CD4-positive, alpha-beta memory T cell (primary cell): ENCODE measurements at regions of chr14 and their contacts with region 1.

Region 1: GRCh38 chr14:71320107-71320733 is 413.0 kb downstream of the PCNX1 start:
- DNase-seq: peak; percentile 98 to 99 (median 99)
- H3K4me3 ChIP-seq: peak within 1 kb of the TSS; percentile 55 to 77
- H3K4me3 Mint-ChIP-seq: peak within 1 kb of the TSS; percentile 91 to 97 (median 93)
- H3K27ac ChIP-seq: peak within 1 kb of the TSS; percentile 92
- H3K27ac Mint-ChIP-seq: peak within 1 kb of the TSS; percentile 90 to 99 (median 97)
- H3K4me1 ChIP-seq: peaks cover 43% of the 10 kb centered on the region
- H3K4me1 Mint-ChIP-seq: peaks cover 37 to 47% (median 41%) of the 10 kb centered on the region in 4 donors
- H3K27me3 ChIP-seq: no peaks in the 10 kb centered on the region
- H3K27me3 Mint-ChIP-seq: no peaks in the 10 kb centered on the region

Region 2: DNA sequence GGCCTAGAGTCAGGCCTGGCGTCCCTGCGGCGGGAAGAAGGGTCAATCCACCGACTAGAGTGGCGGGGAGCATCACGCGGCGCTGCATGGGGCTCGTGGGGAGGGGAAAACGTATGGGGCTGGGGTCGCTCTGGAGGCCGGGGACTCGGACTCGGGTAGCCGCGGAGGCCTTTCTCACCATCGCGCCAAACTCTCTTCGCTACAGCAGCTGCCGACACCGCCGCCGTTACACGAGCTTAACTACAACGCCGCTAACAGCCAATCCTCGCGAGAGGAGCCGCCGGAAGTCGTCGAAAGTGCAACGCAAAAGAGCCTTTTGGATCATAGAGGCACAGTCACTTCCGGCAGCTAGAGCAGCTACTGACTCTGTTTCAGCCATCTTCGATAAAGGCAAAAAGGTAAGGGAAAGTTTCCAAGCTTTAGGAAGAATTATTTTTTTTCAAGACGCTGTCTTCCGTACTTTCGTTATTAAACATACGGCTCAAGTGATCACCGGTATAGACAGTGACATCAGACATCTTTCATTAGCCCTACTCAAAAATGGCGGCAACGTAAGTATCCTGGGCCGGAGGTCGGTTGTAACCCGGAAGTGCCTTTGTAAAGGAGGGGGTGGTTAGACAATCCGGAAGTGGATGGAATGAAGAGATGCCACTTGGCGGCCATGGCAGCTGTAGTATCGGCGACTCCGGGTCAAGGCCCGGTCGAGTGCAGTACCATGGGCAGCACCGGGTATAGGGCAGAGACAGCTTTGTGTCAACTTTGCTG is 1922.0 kb before region 1 on chr14 and contains the starts of genes ERH and SLC39A9:
- CTCF ChIA-PET with region 1: no interaction called
- POLR2A ChIA-PET with region 1: interaction called, 3 read pairs
- intact Hi-C with region 1: loop called (anchors 5 kb)
- DNase-seq: peak; percentile 96 to 98 (median 96)
- H3K4me3 ChIP-seq: peak within 1 kb of the TSS; percentile 86 to 91
- H3K4me3 Mint-ChIP-seq: peak within 1 kb of the TSS; percentile 91 to 99 (median 96)
- H3K27ac ChIP-seq: peak within 1 kb of the TSS; percentile 87
- H3K27ac Mint-ChIP-seq: peak within 1 kb of the TSS; percentile 98 to 100 (median 100)
- H3K4me1 ChIP-seq: peaks cover 81% of the 10 kb centered on the region
- H3K4me1 Mint-ChIP-seq: peaks cover 41 to 89% (median 59%) of the 10 kb centered on the region in 4 donors
- H3K27me3 ChIP-seq: no peaks in the 10 kb centered on the region
- H3K27me3 Mint-ChIP-seq: no peaks in the 10 kb centered on the region
- total RNA-seq, gene ERH: 118 to 135 TPM
- total RNA-seq, gene SLC39A9: 33.7 to 38.6 TPM

Region 3: DNA sequence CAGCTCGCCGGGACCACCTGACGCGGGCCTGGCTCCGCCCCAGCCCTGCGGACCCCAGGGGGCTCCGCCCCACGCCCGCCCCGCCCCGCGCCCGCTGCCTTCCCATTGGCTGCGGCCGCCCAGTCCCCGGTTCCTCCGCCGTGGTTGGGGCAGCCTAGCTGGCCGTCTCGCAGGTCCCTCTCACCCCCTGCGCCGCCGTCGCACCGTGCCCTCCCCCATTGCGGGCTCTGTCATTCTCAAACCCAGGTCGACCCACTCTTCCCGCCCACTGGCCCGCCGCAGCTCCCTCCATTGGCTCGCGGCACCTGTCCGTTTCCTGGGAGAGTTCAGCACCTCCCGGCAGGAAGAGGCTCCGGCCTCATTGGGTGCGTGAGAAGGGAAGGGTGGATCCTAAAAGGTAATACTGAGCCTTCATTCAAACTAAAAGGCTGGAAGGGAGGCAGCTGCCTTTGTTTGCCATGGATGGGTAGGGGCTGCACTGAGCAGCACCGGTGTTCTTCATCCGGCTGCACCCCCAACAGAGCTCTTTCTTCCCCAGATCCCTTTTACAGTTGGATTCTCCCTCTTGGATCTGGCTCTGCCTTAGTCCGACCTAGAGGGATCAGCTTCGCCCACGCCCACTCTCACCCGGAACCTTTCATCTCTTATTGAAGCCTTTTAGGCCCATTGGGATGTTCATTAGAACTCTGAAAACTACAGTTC is 510.5 kb before region 1 on chr14:
- CTCF ChIA-PET with region 1: no interaction called
- POLR2A ChIA-PET with region 1: interaction called, 6 read pairs
- intact Hi-C with region 1: loop called (anchors 10 kb)
- DNase-seq: peak; percentile 79 to 91 (median 82)
- H3K4me3 ChIP-seq: peak overlapping the region; percentile 48 to 75
- H3K4me3 Mint-ChIP-seq: peak overlapping the region in 2 of 8 donors; percentile 93 to 94
- H3K27ac ChIP-seq: peak overlapping the region; percentile 54
- H3K27ac Mint-ChIP-seq: peak overlapping the region in 4 of 7 donors; percentile 73 to 90 (median 83)
- H3K4me1 ChIP-seq: peaks cover 17% of the 10 kb centered on the region
- H3K4me1 Mint-ChIP-seq: peaks cover 8 to 22% (median 12%) of the 10 kb centered on the region in 4 donors
- H3K27me3 ChIP-seq: no peaks in the 10 kb centered on the region
- H3K27me3 Mint-ChIP-seq: no peaks in the 10 kb centered on the region

Region 4: GRCh38 chr14:71267007-71267513 is 53.2 kb before region 1 on chr14:
- CTCF ChIA-PET with region 1: interaction called, 3 read pairs
- POLR2A ChIA-PET with region 1: interaction called, 7 read pairs
- intact Hi-C with region 1: loop called (anchors 2 kb)
- DNase-seq: no peak
- H3K4me3 ChIP-seq: peak overlapping the region; percentile 5 to 34
- H3K4me3 Mint-ChIP-seq: peak overlapping the region; percentile 79 to 89 (median 86)
- H3K27ac ChIP-seq: no peak overlapping the region
- H3K27ac Mint-ChIP-seq: peak overlapping the region in 5 of 7 donors; percentile 41 to 91 (median 83)
- H3K4me1 ChIP-seq: peaks cover 8% of the 10 kb centered on the region
- H3K4me1 Mint-ChIP-seq: peaks cover 9 to 18% (median 12%) of the 10 kb centered on the region in 4 donors
- H3K27me3 ChIP-seq: no peaks in the 10 kb centered on the region
- H3K27me3 Mint-ChIP-seq: no peaks in the 10 kb centered on the region

Region 5: DNA sequence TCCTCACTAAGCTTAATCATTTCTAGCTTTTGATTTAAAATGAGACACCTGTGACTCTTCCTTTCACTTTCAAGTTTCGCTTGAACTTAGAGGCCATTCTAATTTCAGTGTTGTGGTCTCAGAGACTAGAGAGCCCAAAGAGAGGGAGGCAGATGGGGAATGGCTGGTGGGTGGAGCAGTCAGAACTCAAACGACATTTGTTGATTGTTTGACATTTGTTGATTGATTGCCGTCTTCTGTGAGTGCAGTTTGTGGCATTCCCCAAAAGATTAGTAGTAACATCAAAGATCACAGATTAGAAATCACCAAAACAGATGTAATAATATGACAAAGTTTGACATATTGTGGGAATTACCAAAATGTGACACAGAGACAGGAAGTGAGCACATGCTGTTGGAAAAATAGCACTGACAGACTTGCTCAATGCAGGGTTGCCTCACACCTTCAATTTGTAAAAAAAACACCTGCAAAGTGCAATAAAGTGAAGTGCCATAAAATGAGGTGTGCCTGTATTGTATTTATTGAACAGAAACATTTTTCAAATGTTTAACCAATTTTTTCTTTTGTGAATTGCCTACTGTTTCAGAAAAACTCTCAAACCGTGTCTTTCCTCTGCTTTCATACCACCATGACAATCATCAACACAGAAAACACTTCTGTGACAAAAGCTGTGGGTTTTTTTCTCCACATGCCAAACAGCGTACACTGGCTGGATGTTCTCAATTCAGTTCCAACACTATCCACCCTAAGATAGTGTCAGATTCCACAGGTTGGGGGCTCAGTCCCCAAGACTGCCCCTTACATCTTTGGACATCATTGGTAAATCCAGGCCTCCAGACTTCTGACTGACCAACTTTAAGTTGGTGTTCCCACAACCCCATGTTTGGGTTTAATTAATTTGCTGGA is 235.7 kb after region 1 on chr14:
- CTCF ChIA-PET with region 1: interaction called, 3 read pairs
- POLR2A ChIA-PET with region 1: interaction called, 11 read pairs
- intact Hi-C with region 1: loop called (anchors 2 kb)
- DNase-seq: peak; percentile 55 to 88 (median 64)
- H3K4me3 ChIP-seq: peak overlapping the region in 1 of 2 donors; percentile 11
- H3K4me3 Mint-ChIP-seq: peak overlapping the region; percentile 62 to 93 (median 84)
- H3K27ac ChIP-seq: peak overlapping the region; percentile 65
- H3K27ac Mint-ChIP-seq: peak overlapping the region; percentile 85 to 96 (median 94)
- H3K4me1 ChIP-seq: peaks cover 51% of the 10 kb centered on the region
- H3K4me1 Mint-ChIP-seq: peaks cover 38 to 62% (median 53%) of the 10 kb centered on the region in 4 donors
- H3K27me3 ChIP-seq: no peaks in the 10 kb centered on the region
- H3K27me3 Mint-ChIP-seq: no peaks in the 10 kb centered on the region

Region 6: GRCh38 chr14:72060917-72061316 is 740.7 kb after region 1 on chr14:
- CTCF ChIA-PET with region 1: no interaction called
- POLR2A ChIA-PET with region 1: no interaction called
- intact Hi-C with region 1: no loop called
- DNase-seq: no peak
- H3K4me3 ChIP-seq: no peak overlapping the region
- H3K4me3 Mint-ChIP-seq: no peak overlapping the region
- H3K27ac ChIP-seq: no peak overlapping the region
- H3K27ac Mint-ChIP-seq: no peak overlapping the region
- H3K4me1 ChIP-seq: no peaks in the 10 kb centered on the region
- H3K4me1 Mint-ChIP-seq: no peaks in the 10 kb centered on the region
- H3K27me3 ChIP-seq: no peaks in the 10 kb centered on the region
- H3K27me3 Mint-ChIP-seq: peaks cover 5 to 12% of the 10 kb centered on the region in 2 donors

Region 7: GRCh38 chr14:72893636-72894321 is 1573.6 kb after region 1 on chr14 and contains the start of gene DPF3:
- CTCF ChIA-PET with region 1: no interaction called
- POLR2A ChIA-PET with region 1: no interaction called
- intact Hi-C with region 1: loop called (anchors 5 kb)
- DNase-seq: peak; percentile 88 to 93 (median 89)
- H3K4me3 ChIP-seq: peak within 1 kb of the TSS; percentile 78 to 79
- H3K4me3 Mint-ChIP-seq: peak within 1 kb of the TSS; percentile 94 to 99 (median 96)
- H3K27ac ChIP-seq: peak within 1 kb of the TSS; percentile 33
- H3K27ac Mint-ChIP-seq: peak within 1 kb of the TSS; percentile 79 to 91 (median 87)
- H3K4me1 ChIP-seq: peaks cover 27% of the 10 kb centered on the region
- H3K4me1 Mint-ChIP-seq: peaks cover 12 to 29% (median 22%) of the 10 kb centered on the region in 4 donors
- H3K27me3 ChIP-seq: peaks cover 9% of the 10 kb centered on the region
- H3K27me3 Mint-ChIP-seq: peaks cover 26 to 39% of the 10 kb centered on the region in 2 donors
- total RNA-seq, gene DPF3: 0.35 TPM in 1 of 2 experiments, not detected in the other